ENCODE measurements at regions of chr9 and their contacts with region 1.

Region 1: DNA sequence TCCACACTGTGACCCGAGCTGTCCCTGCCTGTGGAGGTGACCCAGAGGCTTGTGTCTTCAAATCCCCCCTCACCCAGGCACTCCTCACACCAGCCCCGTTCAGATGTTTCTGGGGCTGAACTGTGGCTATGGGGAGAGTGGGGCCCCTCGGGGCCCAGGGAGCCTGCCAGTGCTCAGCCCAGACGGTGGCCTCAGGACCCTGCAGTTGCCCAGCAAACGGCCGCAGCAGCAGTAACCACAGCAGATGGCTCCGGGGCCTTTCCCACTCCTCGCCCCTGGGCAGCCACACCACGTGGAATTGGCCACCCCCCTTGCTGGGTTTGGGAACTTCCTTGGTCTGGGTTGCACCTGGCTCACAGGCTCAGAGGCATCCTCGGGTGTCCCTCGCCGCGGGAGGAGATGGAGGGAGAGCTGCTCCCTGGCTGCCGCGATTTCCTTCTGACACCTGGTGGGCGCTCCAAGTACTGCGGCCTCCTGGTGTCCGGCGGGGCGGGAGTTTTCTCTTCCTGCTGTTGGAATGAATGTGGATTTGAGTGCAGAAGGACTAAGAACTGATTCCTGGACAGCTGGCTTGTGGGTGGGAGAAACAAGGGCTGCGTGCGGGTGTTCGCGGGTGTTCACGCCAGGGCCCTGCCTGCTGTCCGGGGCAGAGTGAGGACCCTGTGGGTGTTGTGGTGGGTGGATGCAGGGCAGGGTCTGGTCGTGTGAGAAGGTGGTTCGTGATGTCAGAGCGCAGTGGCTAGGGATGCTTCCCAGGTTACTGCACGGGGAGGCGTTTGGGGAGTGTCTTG is 97.5 kb downstream of the COL5A1 start:
- DNase-seq: peak; percentile 68 to 73
- H3K4me3 ChIP-seq: no peak overlapping the region
- H3K27ac ChIP-seq: no peak overlapping the region
- H3K4me1 ChIP-seq: peaks cover 4 to 5% of the 10 kb centered on the region in 2 donors
- H3K27me3 ChIP-seq: no peaks in the 10 kb centered on the region
- CTCF ChIP-seq: peak; percentile 67 to 93 (median 80)
- POLR2A ChIP-seq: no peak

Region 2: GRCh38 chr9:134449221-134449894 is 289.7 kb before region 1 on chr9:
- intact Hi-C with region 1: loop called (anchors 2 kb)
- DNase-seq: peak; percentile 93 to 95
- H3K4me3 ChIP-seq: no peak overlapping the region
- H3K27ac ChIP-seq: no peak overlapping the region
- H3K4me1 ChIP-seq: no peaks in the 10 kb centered on the region
- H3K27me3 ChIP-seq: no peaks in the 10 kb centered on the region
- CTCF ChIP-seq: peak; percentile 54 to 99 (median 90)
- POLR2A ChIP-seq: no peak

Region 3: GRCh38 chr9:134698587-134699342 is 40.3 kb before region 1 on chr9:
- intact Hi-C with region 1: loop called (anchors 5 kb)
- DNase-seq: peak; percentile 55 to 59
- H3K4me3 ChIP-seq: no peak overlapping the region
- H3K27ac ChIP-seq: no peak overlapping the region
- H3K4me1 ChIP-seq: peaks cover 0 to 3% of the 10 kb centered on the region in 2 donors
- H3K27me3 ChIP-seq: no peaks in the 10 kb centered on the region
- CTCF ChIP-seq: peak; percentile 68 to 93 (median 78)
- POLR2A ChIP-seq: no peak

Region 4: DNA sequence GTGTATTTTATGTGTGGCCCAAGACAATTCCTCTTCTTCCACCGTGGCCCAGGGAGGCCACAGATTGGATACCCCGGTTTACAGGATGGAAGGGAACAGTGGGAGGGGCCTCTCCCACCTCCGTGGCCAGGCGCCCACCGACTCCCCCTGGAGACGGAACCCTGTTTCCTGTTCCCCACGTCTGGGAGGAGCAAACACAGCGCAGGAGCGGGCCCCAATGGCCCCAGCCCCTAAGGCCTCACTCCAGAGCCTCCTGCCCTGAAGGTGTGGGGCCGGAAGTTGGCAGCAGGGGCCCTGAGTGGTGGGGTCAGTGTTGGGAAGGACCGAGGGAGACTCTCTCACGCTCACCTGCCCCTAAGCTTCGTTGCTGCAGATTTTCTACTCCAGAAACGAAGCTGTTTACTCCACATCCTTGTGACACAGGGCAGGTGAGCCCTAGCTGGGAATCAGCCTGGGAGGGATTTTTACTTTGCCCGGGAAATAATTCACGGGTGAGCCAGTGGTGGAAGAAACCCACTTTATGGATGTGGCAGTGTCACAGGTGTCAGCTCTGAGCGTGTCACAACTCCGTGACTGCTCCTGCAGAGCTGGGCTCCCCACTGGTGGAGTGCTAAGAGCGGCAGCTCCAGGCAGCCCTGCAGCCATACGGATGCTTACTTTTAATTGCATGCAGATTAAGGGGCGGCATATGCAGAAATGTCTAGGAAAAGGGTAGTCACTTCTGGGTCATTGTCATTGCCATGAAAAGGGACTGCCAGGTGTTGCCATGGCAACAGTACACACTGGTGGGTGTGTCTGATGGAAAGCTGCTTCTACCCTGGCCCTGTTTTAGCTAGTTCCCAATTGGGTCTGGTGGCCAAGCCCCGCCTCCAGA is 270.9 kb after region 1 on chr9:
- intact Hi-C with region 1: no loop called
- DNase-seq: no peak
- H3K4me3 ChIP-seq: no peak overlapping the region
- H3K27ac ChIP-seq: no peak overlapping the region
- H3K4me1 ChIP-seq: peaks cover 6 to 14% of the 10 kb centered on the region in 2 donors
- H3K27me3 ChIP-seq: no peaks in the 10 kb centered on the region
- CTCF ChIP-seq: no peak
- POLR2A ChIP-seq: no peak